PC-9 (cell line): ENCODE measurements at regions of chr11 and their contacts with region 1.

Region 1: GRCh38 chr11:65477149-65477965 is 21.5 kb upstream of the MALAT1 start:
- DNase-seq: peak; percentile 87 to 98
- H3K4me3 ChIP-seq: peak overlapping the region; percentile 74
- H3K27ac ChIP-seq: peak overlapping the region; percentile 88
- H3K4me1 ChIP-seq: peaks cover 61% of the 10 kb centered on the region
- H3K27me3 ChIP-seq: no peaks in the 10 kb centered on the region
- CTCF ChIP-seq: no peak

Region 2: DNA sequence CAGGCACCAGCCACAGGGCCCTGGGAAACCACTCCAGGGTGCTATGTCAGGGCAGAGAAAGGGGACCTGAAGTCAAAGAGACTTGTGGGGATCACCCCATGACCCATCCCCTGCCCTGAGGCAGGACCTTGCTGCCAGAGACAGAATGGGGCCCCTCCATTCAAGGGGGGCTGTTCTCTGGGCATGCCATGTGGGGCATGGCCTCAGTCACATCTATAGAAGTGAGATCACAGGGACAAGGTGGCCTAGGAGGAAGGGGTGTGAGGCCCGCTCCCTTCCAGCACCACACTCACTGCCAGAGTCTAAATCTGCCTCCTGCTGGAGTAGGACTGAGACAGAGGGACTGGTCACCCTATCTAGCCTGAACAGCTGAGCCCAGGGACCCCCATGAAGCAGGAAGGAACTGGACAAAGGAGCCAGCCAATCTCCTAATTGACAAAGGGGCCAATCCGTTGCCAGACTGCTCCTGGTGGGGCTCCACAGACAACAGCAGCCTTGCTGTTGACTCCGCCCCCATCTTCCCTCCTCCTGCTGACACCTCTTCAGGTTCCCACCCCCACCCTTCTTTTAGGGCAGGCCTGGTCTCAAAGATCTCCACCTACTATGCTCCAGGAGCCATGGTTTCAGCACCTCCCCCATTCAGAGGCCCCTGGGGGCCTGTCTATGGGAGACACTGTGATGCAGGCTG is 28.8 kb before region 1 on chr11:
- CTCF ChIA-PET with region 1: no interaction called
- POLR2A ChIA-PET with region 1: interaction called, 10 read pairs
- intact Hi-C with region 1: no loop called
- DNase-seq: peak in 1 of 2 experiments; percentile 34
- H3K4me3 ChIP-seq: no peak overlapping the region
- H3K27ac ChIP-seq: no peak overlapping the region
- H3K4me1 ChIP-seq: peaks cover 11% of the 10 kb centered on the region
- H3K27me3 ChIP-seq: no peaks in the 10 kb centered on the region
- CTCF ChIP-seq: no peak

Region 3: GRCh38 chr11:65487413-65488272 is 10.3 kb after region 1 on chr11:
- CTCF ChIA-PET with region 1: interaction called, 18 read pairs
- POLR2A ChIA-PET with region 1: interaction called, 34 read pairs
- intact Hi-C with region 1: no loop called
- DNase-seq: peak; percentile 98 to 99
- H3K4me3 ChIP-seq: no peak overlapping the region
- H3K27ac ChIP-seq: peak overlapping the region; percentile 88
- H3K4me1 ChIP-seq: peaks cover 79% of the 10 kb centered on the region
- H3K27me3 ChIP-seq: no peaks in the 10 kb centered on the region
- CTCF ChIP-seq: no peak

Region 4: GRCh38 chr11:65652511-65653231 is 175.3 kb after region 1 on chr11:
- CTCF ChIA-PET with region 1: no interaction called
- POLR2A ChIA-PET with region 1: interaction called, 16 read pairs
- intact Hi-C with region 1: no loop called
- DNase-seq: peak; percentile 82 to 98
- H3K4me3 ChIP-seq: peak overlapping the region; percentile 64
- H3K27ac ChIP-seq: peak overlapping the region; percentile 76
- H3K4me1 ChIP-seq: peaks cover 35% of the 10 kb centered on the region
- H3K27me3 ChIP-seq: no peaks in the 10 kb centered on the region
- CTCF ChIP-seq: no peak

Region 5: DNA sequence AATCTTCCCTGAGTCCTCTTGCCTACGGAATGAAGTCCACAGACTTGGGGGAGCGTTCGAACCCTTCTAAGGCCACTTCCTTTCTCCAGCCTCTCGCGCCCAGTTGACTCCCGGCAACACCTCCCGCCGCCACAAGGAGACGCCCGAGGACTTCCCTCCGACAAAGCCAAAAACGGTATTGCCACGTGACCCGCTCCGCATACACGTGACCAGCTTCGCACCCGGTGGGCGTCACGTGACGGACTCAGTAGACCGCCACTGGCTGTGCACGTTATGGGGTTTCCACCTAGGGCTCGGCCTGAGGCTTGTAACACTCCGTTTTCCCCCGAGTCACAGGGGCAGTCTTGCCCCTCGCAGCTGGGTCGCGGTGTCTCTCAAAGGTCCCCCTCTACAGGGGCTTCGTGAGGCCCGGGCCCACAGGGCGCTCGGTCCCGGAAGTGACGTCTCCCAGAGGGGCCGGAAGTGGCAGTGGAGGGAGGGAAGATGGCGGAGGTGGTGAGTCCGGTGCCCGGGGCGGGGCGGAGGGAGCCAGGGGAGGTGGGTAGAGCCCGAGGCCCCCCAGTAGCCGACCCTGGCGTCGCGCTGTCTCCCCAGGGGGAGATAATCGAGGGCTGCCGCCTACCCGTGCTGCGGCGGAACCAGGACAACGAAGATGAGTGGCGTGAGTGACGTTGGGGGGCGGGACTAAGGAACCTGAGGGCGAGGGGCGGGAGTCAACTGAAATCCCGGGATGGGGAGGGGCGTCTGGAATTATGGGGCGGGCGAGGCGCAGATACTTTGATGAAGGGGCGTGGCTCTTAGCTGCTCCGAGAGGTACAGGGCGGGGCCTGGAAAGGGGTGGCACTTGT is 234.7 kb after region 1 on chr11 and contains the start of gene KAT5:
- CTCF ChIA-PET with region 1: no interaction called
- POLR2A ChIA-PET with region 1: no interaction called
- intact Hi-C with region 1: no loop called
- DNase-seq: peak; percentile 96 to 99
- H3K4me3 ChIP-seq: peak within 1 kb of the TSS; percentile 86
- H3K27ac ChIP-seq: peak within 1 kb of the TSS; percentile 91
- H3K4me1 ChIP-seq: peaks cover 13% of the 10 kb centered on the region
- H3K27me3 ChIP-seq: no peaks in the 10 kb centered on the region
- CTCF ChIP-seq: peak; percentile 97
- total RNA-seq, gene KAT5: 49.6 and 57.1 TPM in 2 replicates

Region 6: GRCh38 chr11:65927904-65928397 is 450.6 kb after region 1 on chr11:
- CTCF ChIA-PET with region 1: no interaction called
- POLR2A ChIA-PET with region 1: no interaction called
- intact Hi-C with region 1: no loop called
- DNase-seq: no peak
- H3K4me3 ChIP-seq: no peak overlapping the region
- H3K27ac ChIP-seq: no peak overlapping the region
- H3K4me1 ChIP-seq: no peaks in the 10 kb centered on the region
- H3K27me3 ChIP-seq: no peaks in the 10 kb centered on the region
- CTCF ChIP-seq: no peak